Sigmoid colon (tissue), 7 donors: ENCODE measurements at regions of chr16 and their contacts with region 1.

Region 1: DNA sequence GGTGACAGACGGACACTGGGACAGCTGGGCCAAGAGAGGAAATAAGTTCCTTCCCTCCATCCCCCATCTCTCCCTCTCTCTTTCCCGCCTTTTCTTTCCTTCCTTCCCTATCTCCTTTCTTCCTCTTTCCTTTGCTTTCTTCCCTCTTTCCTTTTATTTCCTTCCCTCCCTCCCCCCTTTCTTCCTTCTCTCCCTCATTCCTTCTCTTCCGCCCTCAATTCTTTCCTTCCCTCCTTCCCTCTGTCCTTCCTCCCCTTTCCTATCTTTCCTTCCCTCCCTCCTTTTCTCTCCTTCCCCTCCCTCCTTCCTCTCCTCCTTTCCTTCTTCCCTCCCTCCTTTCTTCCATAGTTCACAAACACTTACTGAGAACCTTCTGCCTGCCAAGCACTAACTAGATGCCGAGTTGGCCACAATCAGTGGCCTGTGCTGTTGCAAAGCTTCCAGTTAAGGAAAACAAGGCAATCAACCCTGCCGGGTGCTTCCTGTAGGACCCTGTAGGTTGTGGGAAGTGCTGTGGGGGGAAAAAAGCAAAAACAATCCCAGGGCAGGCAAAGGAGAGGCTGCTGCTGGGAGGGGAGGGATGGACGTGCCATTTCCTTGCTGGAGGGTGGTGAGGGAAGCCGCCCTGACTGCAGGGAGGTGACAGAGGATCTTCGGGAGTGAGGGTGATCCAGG is 31.7 kb downstream of the ABCC6 start:
- DNase-seq: no peak
- H3K4me3 ChIP-seq: no peak overlapping the region
- H3K27ac ChIP-seq: peak overlapping the region in 3 of 4 donors; percentile 37 to 56 (median 50)
- H3K4me1 ChIP-seq: peaks cover 0 to 20% (median 6%) of the 10 kb centered on the region in 4 donors
- H3K27me3 ChIP-seq: no peaks in the 10 kb centered on the region
- CTCF ChIP-seq: no peak
- EP300 ChIP-seq: no peak
- POLR2A ChIP-seq: no peak

Region 2: GRCh38 chr16:15427648-15428239 is 763.9 kb before region 1 on chr16:
- intact Hi-C with region 1: loop called (anchors 5 kb)
- DNase-seq: peak; percentile 83
- H3K4me3 ChIP-seq: peak overlapping the region in 1 of 4 donors; percentile 20
- H3K27ac ChIP-seq: peak overlapping the region; percentile 42 to 66 (median 55)
- H3K4me1 ChIP-seq: peaks cover 0 to 12% (median 11%) of the 10 kb centered on the region in 4 donors
- H3K27me3 ChIP-seq: no peaks in the 10 kb centered on the region
- CTCF ChIP-seq: peak; percentile 46 to 62 (median 60)
- EP300 ChIP-seq: no peak
- POLR2A ChIP-seq: no peak

Region 3: DNA sequence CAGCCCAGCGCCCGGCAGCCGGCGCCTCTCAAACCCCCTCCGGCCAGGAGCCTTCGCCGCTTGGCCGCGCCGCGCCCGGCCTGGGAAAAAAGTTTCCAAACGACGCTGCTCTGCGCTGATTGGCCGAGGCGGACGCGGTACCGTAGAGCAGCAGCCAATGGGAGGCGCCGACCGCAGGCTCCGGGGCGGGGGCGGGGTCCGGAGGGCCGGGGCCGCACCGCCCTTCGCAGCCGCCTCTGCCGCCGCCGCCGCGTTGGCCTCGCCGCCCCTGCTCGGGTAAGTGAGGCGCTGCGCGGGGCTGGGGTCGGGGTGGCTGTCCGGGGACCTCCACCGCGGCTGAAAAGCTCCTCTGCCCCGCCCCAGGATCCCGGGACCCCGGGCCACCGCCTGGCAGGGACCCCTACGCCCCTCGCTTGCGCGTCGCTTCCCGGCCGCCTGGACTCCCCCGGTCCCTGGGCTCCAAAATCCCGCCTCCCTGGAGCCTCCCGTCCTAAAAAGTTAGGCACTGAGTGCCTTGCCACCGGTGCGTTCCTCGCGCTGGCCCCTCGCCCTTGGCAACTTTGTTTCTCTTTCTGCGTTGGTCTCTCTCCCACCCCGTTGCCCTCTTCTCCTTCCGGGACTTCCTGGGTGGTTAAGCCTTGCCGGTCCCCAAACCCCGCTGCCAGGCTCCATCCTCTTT is 541.5 kb before region 1 on chr16 and contains the start of gene NDE1:
- intact Hi-C with region 1: loop called (anchors 5 kb)
- DNase-seq: peak; percentile 96
- H3K4me3 ChIP-seq: peak within 1 kb of the TSS; percentile 75 to 96 (median 86)
- H3K27ac ChIP-seq: peak within 1 kb of the TSS; percentile 94 to 99 (median 96)
- H3K4me1 ChIP-seq: peaks cover 0 to 52% (median 42%) of the 10 kb centered on the region in 4 donors
- H3K27me3 ChIP-seq: no peaks in the 10 kb centered on the region
- CTCF ChIP-seq: no peak
- EP300 ChIP-seq: no peak
- POLR2A ChIP-seq: peak in 1 of 2 donors; percentile 40
- total RNA-seq, gene NDE1: 27.1 to 86.1 (median 35.3) TPM

Region 4: GRCh38 chr16:15765880-15766279 is 425.8 kb before region 1 on chr16:
- intact Hi-C with region 1: loop called (anchors 10 kb)
- DNase-seq: no peak
- H3K4me3 ChIP-seq: no peak overlapping the region
- H3K27ac ChIP-seq: peak overlapping the region; percentile 55 to 95 (median 72)
- H3K4me1 ChIP-seq: peaks cover 0 to 92% (median 73%) of the 10 kb centered on the region in 4 donors
- H3K27me3 ChIP-seq: no peaks in the 10 kb centered on the region
- CTCF ChIP-seq: peak in 2 of 4 experiments; percentile 22 to 45
- EP300 ChIP-seq: no peak
- POLR2A ChIP-seq: no peak

Region 5: DNA sequence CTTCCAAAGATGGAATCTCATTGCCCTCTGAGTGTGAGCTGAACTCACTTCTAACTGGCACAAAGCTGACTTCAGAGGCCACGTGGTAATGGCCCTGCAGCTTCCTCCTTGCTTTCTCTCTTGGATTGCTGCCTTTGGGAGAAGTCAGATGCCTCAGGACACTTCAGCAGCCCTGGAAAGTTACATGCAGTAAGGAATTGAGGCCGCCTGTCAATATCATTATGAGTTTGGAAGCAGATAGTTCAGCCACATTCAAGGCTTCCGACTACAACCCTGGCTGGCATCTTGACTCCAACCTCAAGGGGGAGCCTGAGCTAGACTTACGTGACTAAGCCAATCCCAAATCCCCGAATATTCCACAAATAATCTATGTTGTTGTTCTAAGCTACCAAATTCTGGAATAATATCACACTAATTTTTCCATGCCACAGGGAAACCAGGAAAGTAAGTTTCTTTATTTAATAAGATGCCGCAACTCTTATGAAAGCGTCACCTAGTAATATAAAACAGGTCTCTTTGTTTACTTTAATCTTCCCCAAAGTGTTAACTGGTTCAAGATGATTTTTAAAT is 316.8 kb before region 1 on chr16:
- intact Hi-C with region 1: no loop called
- DNase-seq: peak; percentile 83
- H3K4me3 ChIP-seq: no peak overlapping the region
- H3K27ac ChIP-seq: peak overlapping the region; percentile 71 to 83 (median 74)
- H3K4me1 ChIP-seq: peaks cover 0 to 39% (median 25%) of the 10 kb centered on the region in 4 donors
- H3K27me3 ChIP-seq: no peaks in the 10 kb centered on the region
- CTCF ChIP-seq: peak; percentile 59 to 69 (median 64)
- EP300 ChIP-seq: peak in 1 of 4 donors; percentile 63
- POLR2A ChIP-seq: no peak

Region 6: GRCh38 chr16:16150117-16150877 is 41.3 kb before region 1 on chr16:
- intact Hi-C with region 1: loop called (anchors 5 kb)
- DNase-seq: peak; percentile 96
- H3K4me3 ChIP-seq: no peak overlapping the region
- H3K27ac ChIP-seq: peak overlapping the region; percentile 73 to 93 (median 86)
- H3K4me1 ChIP-seq: peaks cover 0 to 53% (median 35%) of the 10 kb centered on the region in 4 donors
- H3K27me3 ChIP-seq: no peaks in the 10 kb centered on the region
- CTCF ChIP-seq: no peak
- EP300 ChIP-seq: peak in 2 of 4 donors; percentile 13 to 68
- POLR2A ChIP-seq: no peak